ENCODE measurements at regions of chr1 and their contacts with region 1.

Region 1: GRCh38 chr1:160550572-160551034 is 27.5 kb upstream of the SLAMF6 start:
- DNase-seq: peak; percentile 26 to 45 (median 42)
- H3K4me3 ChIP-seq: no peak overlapping the region
- H3K27ac ChIP-seq: no peak overlapping the region
- H3K4me1 ChIP-seq: peaks cover 0 to 14% (median 3%) of the 10 kb centered on the region in 4 experiments
- H3K27me3 ChIP-seq: no peaks in the 10 kb centered on the region

Region 2: GRCh38 chr1:160567858-160568682 is 17.5 kb after region 1 on chr1:
- CTCF ChIA-PET with region 1: interaction called, 19 read pairs
- POLR2A ChIA-PET with region 1: no interaction called
- DNase-seq: peak; percentile 87 to 98 (median 96)
- H3K4me3 ChIP-seq: peak overlapping the region in 4 of 7 experiments; percentile 10 to 51 (median 38)
- H3K27ac ChIP-seq: peak overlapping the region in 1 of 2 experiments; percentile 69
- H3K4me1 ChIP-seq: peaks cover 3 to 42% (median 27%) of the 10 kb centered on the region in 4 experiments
- H3K27me3 ChIP-seq: peaks cover 0 to 54% (median 9%) of the 10 kb centered on the region in 5 experiments

Region 3: GRCh38 chr1:160575112-160575664 is 24.6 kb after region 1 on chr1:
- CTCF ChIA-PET with region 1: interaction called, 19 read pairs
- POLR2A ChIA-PET with region 1: no interaction called
- DNase-seq: peak in 2 of 3 donors; percentile 56 to 67
- H3K4me3 ChIP-seq: peak overlapping the region in 4 of 7 experiments; percentile 3 to 48 (median 24)
- H3K27ac ChIP-seq: no peak overlapping the region
- H3K4me1 ChIP-seq: peaks cover 23 to 60% (median 42%) of the 10 kb centered on the region in 4 experiments
- H3K27me3 ChIP-seq: peaks cover 0 to 26% (median 7%) of the 10 kb centered on the region in 5 experiments

Region 4: GRCh38 chr1:161021165-161021960 is 470.8 kb after region 1 on chr1:
- CTCF ChIA-PET with region 1: no interaction called
- POLR2A ChIA-PET with region 1: no interaction called
- DNase-seq: peak; percentile 78 to 92 (median 87)
- H3K4me3 ChIP-seq: peak overlapping the region; percentile 71 to 96 (median 83)
- H3K27ac ChIP-seq: peak overlapping the region; percentile 25 to 74
- H3K4me1 ChIP-seq: peaks cover 15 to 43% (median 34%) of the 10 kb centered on the region in 4 experiments
- H3K27me3 ChIP-seq: no peaks in the 10 kb centered on the region

Measured in common myeloid progenitor, CD34-positive (primary cell).